Vagina (tissue), 2 donors: ENCODE measurements at regions of chr2 and their contacts with region 1.

Region 1: GRCh38 chr2:180203972-180204371 is 196.9 kb upstream of the CWC22 start:
- DNase-seq: no peak
- H3K4me3 ChIP-seq: no peak overlapping the region
- H3K27ac ChIP-seq: no peak overlapping the region
- H3K4me1 ChIP-seq: no peaks in the 10 kb centered on the region
- H3K27me3 ChIP-seq: no peaks in the 10 kb centered on the region
- CTCF ChIP-seq: no peak
- POLR2A ChIP-seq: no peak

Region 2: DNA sequence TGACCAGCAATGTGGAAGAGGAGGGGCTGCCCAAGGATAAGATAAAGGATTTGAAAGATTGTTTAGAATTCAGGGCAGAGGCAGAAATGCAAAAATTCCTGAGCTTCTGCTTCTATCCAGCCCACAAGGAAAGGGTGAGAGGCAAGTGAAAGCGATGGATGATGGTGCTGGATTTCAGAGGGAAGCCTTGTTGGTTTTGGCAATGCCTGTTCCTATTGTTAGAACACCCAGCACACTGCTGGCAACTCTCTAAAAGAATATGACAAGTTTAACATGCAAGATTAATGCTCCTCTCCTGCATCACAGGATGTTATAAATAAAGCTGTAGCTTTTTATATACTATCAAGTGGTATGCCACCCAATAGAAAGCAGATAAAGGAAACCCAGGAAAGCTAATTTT is 435.2 kb before region 1 on chr2:
- intact Hi-C with region 1: no loop called
- DNase-seq: no peak
- H3K4me3 ChIP-seq: no peak overlapping the region
- H3K27ac ChIP-seq: no peak overlapping the region
- H3K4me1 ChIP-seq: no peaks in the 10 kb centered on the region
- H3K27me3 ChIP-seq: no peaks in the 10 kb centered on the region
- CTCF ChIP-seq: no peak
- POLR2A ChIP-seq: no peak

Region 3: DNA sequence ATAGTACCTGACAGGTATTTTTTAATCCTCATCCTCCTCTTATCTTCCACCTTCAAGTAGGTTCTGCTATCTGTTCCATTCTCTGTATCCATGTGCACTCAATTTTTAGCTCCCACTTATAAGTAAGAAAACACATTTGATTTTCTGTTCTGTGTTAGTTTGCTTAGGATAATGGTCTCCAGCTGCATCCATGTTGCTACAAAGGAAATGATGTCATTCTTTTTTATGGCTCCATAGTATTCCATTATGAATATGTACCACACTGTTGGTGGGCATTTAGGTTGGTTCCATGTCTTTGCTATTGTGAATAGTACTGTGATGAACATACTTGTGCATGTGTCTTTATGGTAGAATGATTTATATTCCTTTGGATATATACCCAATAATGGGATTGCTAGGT is 109.9 kb before region 1 on chr2:
- intact Hi-C with region 1: no loop called
- DNase-seq: no peak
- H3K4me3 ChIP-seq: no peak overlapping the region
- H3K27ac ChIP-seq: no peak overlapping the region
- H3K4me1 ChIP-seq: no peaks in the 10 kb centered on the region
- H3K27me3 ChIP-seq: no peaks in the 10 kb centered on the region
- CTCF ChIP-seq: no peak
- POLR2A ChIP-seq: no peak

Region 4: DNA sequence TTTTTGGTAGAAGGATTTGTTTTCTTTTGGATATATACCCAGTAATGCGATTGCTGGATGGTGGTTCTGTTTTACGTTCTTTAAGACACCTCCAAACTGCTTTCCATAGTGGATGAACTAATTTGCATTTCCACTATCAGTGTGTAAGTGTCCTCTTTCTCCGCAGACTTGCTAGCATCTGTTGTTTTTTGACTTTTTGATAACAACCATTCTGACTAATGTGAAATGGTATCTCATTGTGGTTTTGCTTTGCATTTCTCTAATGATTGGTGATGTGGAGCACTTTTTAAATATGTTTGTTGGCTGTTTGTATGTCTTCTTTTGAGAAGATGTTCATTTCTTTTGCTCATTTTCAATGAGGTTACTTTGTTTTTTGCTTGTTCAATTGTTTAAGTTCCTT is 64.0 kb after region 1 on chr2:
- intact Hi-C with region 1: loop called (anchors 2 kb)
- DNase-seq: no peak
- H3K4me3 ChIP-seq: no peak overlapping the region
- H3K27ac ChIP-seq: no peak overlapping the region
- H3K4me1 ChIP-seq: no peaks in the 10 kb centered on the region
- H3K27me3 ChIP-seq: no peaks in the 10 kb centered on the region
- CTCF ChIP-seq: no peak
- POLR2A ChIP-seq: no peak